ENCODE measurements at regions of chr15 and their contacts with region 1.

Region 1: GRCh38 chr15:36883713-36884517 is 216.4 kb downstream of the MEIS2 start:
- H3K4me3 Mint-ChIP-seq: no peak overlapping the region
- H3K27ac Mint-ChIP-seq: no peak overlapping the region
- H3K4me1 Mint-ChIP-seq: peaks cover 6% of the 10 kb centered on the region
- H3K27me3 Mint-ChIP-seq: peaks cover 96% of the 10 kb centered on the region

Region 2: DNA sequence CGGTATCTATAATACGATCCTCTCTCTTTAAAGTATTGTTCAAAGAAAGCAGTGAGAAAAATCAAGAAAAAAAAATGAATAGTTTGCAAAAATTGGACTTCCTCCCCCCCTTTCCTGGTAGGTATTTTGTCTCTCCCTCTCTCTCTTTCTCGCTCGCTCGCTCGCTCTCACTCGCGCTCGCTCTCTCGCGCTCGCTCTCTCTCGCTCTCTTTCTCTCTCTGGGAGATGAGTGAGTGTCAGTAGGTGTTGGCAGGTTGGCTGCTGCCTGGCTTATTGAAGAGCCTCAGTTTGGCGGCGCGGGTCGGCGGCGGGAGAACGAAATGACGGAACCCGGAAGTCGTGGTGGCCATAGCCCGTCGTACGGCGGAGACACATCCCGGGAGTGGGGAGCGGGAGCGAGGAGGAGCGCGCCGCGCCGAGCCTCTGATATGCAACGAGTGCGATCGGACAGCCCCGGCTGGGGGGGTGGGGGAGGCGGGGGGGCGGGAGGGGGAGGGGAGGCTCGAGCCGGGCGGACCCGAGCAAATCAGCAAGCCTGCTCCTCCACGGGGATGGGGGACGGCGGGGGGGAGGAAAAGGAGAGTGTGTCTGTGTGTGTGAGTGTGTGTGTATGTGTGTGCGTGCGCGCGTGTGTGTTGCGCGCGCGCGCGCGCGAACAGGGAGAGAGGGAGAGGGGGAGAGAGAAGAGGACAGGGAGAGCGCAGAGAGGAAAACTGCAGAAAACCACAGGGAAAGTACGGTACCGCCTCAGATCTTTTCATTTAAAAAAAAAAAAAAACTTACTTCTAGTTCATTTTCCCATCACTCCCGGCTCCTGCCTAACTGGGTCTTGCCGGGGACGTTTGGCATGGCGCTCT is 216.4 kb after region 1 on chr15 and contains the start of gene MEIS2:
- intact Hi-C with region 1: loop called (anchors 10 kb)
- H3K4me3 Mint-ChIP-seq: peak within 1 kb of the TSS; percentile 88
- H3K27ac Mint-ChIP-seq: peak within 1 kb of the TSS; percentile 73
- H3K4me1 Mint-ChIP-seq: peaks cover 53% of the 10 kb centered on the region
- H3K27me3 Mint-ChIP-seq: peaks cover 98% of the 10 kb centered on the region

Region 3: GRCh38 chr15:37891766-37892368 is 1008.0 kb after region 1 on chr15:
- intact Hi-C with region 1: loop called (anchors 5 kb)
- H3K4me3 Mint-ChIP-seq: no peak overlapping the region
- H3K27ac Mint-ChIP-seq: no peak overlapping the region
- H3K4me1 Mint-ChIP-seq: no peaks in the 10 kb centered on the region
- H3K27me3 Mint-ChIP-seq: no peaks in the 10 kb centered on the region